Kidney (tissue), 22 donors: ENCODE measurements at regions of chr6 and their contacts with region 1.

Region 1: DNA sequence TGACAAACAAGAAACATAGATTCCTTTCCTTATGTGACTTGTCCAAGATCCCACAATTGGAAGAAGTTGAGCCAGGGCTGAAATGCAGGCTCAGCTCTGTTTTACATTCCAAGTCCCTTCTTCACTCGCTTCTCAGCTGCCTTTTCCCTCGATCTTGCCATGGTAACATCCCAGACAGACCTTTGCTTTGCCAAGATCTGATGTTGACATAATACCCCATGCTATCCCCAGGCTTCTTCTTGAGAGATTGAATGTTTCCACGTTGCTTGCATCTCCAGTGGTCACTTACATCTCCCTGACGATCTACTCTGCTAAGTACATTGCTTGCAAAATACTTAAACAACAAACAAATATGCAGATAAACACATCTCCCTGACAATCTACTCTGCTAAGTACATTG is 63.5 kb downstream of the TBXT start:
- DNase-seq: no peak
- H3K4me3 ChIP-seq: no peak overlapping the region
- H3K27ac ChIP-seq: no peak overlapping the region
- H3K4me1 ChIP-seq: peaks cover 0 to 3% (median 0%) of the 10 kb centered on the region in 3 donors
- H3K27me3 ChIP-seq: no peaks in the 10 kb centered on the region
- CTCF ChIP-seq: no peak

Region 2: GRCh38 chr6:165884813-165885765 is 219.0 kb before region 1 on chr6:
- intact Hi-C with region 1: loop called (anchors 5 kb)
- DNase-seq: peak; percentile 87 to 93 (median 90)
- H3K4me3 ChIP-seq: no peak overlapping the region
- H3K27ac ChIP-seq: no peak overlapping the region
- H3K4me1 ChIP-seq: peaks cover 0 to 3% (median 0%) of the 10 kb centered on the region in 3 donors
- H3K27me3 ChIP-seq: no peaks in the 10 kb centered on the region
- CTCF ChIP-seq: peak; percentile 92

Region 3: DNA sequence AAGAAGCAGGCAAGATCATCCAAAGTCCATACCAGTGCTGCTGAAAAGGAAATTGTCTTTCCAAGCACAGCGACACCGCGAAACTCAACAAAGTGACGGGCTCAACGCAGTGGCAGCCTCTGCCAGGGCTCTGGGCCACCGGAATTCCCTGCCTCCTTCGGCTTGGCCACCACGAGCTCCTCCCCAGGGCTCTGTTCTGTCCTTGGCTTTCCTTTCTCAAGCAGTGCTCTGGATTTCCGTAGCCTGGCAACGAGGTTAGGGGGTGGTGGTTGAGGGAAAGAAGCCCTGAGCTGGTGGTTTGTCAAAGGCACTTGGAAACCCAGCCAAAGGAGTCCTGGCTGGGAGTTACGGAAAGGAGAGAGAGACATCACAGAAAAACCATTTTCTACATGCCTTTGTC is 172.9 kb after region 1 on chr6:
- intact Hi-C with region 1: no loop called
- DNase-seq: no peak
- H3K4me3 ChIP-seq: no peak overlapping the region
- H3K27ac ChIP-seq: no peak overlapping the region
- H3K4me1 ChIP-seq: no peaks in the 10 kb centered on the region
- H3K27me3 ChIP-seq: peaks cover 2% of the 10 kb centered on the region
- CTCF ChIP-seq: no peak

Region 4: GRCh38 chr6:166435574-166435973 is 331.5 kb after region 1 on chr6:
- intact Hi-C with region 1: no loop called
- DNase-seq: no peak
- H3K4me3 ChIP-seq: no peak overlapping the region
- H3K27ac ChIP-seq: no peak overlapping the region
- H3K4me1 ChIP-seq: no peaks in the 10 kb centered on the region
- H3K27me3 ChIP-seq: no peaks in the 10 kb centered on the region
- CTCF ChIP-seq: no peak

Region 5: GRCh38 chr6:166450167-166450873 is 346.2 kb after region 1 on chr6:
- intact Hi-C with region 1: no loop called
- DNase-seq: peak in 1 of 5 donors; percentile 39
- H3K4me3 ChIP-seq: no peak overlapping the region
- H3K27ac ChIP-seq: no peak overlapping the region
- H3K4me1 ChIP-seq: no peaks in the 10 kb centered on the region
- H3K27me3 ChIP-seq: no peaks in the 10 kb centered on the region
- CTCF ChIP-seq: no peak